Left cardiac atrium (tissue), 4 donors: ENCODE measurements at regions of chr4 and their contacts with region 1.

Region 1: DNA sequence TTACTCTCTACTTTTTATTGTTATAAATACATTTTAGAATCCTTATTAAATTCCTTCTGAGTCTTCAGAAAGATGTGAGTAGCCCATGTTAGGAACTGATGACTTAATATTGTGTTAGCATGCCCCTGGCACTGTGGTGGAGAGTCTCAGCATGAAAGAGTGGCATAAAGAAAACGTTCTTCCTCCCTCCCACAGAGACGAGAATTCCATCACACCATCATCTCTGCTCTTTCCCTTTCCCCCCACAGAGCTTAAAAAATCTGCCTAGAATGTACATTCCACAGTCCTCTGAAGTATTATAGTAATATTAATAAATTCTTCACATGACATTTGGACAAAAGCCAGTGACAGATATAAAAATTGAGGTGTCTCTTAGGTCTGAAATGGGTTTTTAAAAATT is 117.8 kb upstream of the DKK2 start:
- DNase-seq: no peak
- ATAC-seq: no peak

Region 2: DNA sequence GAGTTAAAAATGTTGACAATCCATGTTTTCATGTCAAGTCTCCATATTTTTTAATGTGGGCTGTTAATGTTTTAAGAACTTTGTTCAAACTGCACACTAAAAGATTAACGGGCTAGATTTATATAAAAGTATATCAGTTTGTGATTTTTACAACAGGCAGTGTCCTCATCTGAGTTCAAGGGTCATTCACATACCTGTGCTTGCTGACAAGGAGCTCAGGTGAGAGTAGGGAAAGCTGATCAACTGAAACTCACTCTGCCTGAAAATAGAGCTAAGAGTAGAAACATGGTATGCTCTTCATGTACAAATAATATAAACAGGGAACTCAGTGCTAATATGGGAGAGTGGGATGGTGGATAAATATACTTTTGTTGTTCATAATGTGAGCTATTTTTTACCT is 15.5 kb before region 1 on chr4:
- intact Hi-C with region 1: loop called in 1 of 2 experiments (anchors 2 kb)
- DNase-seq: no peak
- ATAC-seq: no peak